Posterior vena cava (tissue), 2 donors: ENCODE measurements at regions of chr20 and their contacts with region 1.

Region 1: GRCh38 chr20:61447952-61448351 is 195.9 kb downstream of the CDH4 start:
- DNase-seq: no peak

Region 2: DNA sequence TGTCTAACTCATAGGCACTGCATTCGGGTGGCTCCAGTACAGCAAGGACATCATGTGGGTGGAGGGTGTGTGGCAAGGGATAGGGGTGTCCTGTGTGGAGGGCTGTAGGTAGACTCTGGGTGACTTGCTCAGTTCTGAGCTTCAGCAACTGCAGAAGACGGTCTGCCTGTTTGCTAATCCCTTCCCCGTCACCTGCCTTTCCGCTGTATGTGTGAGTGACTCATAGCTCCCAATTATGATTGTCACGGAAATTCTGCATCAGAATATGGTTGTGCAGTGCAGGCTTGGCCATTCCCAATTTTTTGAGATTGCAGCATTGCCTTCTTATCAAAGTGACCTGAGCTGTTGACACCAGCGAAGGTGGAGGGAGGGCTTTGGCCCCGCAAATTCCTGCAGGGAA is 21.6 kb before region 1 on chr20:
- intact Hi-C with region 1: no loop called
- DNase-seq: peak; percentile 15

Region 3: GRCh38 chr20:62473717-62474603 is 1026.0 kb after region 1 on chr20:
- intact Hi-C with region 1: loop called in 1 of 2 experiments (anchors 5 kb)
- DNase-seq: no peak